Endothelial cell of umbilical vein (primary cell): ENCODE measurements at regions of chr13 and their contacts with region 1.

Region 1: DNA sequence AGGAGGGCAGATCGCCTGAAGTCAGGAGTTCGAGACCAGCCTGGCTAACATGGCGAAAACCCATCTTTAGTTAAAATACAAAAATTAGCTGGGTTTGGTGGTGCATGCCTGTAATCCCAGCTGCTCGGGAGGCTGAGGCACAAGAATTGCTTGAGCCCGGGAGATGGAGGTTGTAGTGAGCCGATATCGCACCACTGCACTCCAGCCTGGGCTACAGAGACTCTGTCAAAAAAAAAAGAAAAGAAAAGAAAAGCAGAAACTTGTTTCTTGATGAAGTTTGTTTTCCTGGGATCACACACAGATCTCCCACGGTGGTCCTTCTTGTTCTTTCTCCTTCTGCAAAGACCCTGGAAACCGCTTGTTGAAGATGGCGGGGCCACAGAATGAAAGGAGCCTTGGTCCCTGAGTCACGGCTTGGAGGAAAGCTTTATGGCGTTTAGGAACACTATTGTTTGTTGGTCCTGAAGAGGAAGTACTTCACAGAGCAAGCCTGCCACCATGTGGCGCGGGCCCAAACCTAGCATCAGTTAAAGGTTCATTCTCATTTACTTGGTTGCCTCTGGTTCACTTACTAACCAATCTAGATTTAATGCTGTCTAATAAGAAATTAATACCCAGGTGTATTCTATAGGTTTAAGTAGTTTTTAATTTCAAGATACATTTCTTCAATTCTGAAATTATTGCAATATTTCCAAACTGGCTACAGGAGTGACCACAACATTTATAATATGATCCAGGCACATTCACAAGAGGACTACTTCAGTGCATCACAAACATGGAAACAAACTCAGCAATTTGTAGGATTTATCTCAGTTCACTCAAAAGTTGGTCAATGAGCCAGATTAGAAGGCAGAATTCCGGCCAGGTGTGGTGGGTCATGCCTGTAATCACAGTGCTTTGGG is 21.3 kb upstream of the ARL11 start:
- DNase-seq: peak; percentile 89
- H3K4me3 ChIP-seq: peak overlapping the region in 2 of 3 experiments; percentile 5 to 27
- H3K27ac ChIP-seq: peak overlapping the region; percentile 28
- H3K4me1 ChIP-seq: no peaks in the 10 kb centered on the region
- H3K27me3 ChIP-seq: no peaks in the 10 kb centered on the region
- CTCF ChIP-seq: peak; percentile 80 to 83
- POLR2A ChIP-seq: no peak

Region 2: DNA sequence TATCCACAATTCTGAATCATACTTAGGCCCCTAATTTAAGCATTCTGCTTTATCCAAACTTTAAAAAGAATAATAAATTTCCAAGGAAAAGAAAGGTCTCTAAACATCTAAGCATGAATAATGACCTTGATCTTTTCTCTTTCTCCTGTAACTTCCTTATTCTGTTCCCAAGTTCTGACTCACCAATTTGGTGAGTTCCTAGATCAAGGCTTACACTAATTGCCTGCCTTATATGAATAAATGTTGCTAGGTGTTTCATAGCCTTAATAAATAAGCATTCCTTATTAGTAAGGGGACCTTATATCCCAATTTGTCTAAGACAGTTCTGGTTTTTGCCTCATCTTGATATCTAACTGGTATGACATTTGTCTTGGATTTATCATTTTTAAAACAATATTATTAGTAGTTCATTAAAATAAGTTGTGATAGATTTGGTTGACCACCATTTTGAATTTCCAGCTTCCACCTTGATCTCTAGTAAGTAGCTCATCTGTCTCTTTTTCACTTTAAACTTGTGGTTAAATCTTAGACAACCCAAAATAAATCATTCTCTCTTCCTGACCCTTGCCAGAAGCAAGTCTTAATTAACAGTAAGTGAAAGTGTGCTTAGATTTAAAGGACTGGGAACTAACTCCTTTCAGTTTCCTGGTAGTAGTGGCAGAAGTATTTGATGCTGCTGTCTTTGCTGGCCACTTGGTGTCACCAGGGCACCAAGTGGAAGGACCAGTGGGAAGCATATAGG is 508.1 kb before region 1 on chr13:
- CTCF ChIA-PET with region 1: interaction called, 8 read pairs
- POLR2A ChIA-PET with region 1: no interaction called
- dilution Hi-C with region 1: no loop called
- intact Hi-C with region 1: loop called (anchors 5 kb)
- DNase-seq: peak; percentile 65
- H3K4me3 ChIP-seq: peak overlapping the region in 1 of 3 experiments; percentile 12
- H3K27ac ChIP-seq: peak overlapping the region; percentile 70
- H3K4me1 ChIP-seq: peaks cover 24% of the 10 kb centered on the region
- H3K27me3 ChIP-seq: no peaks in the 10 kb centered on the region
- CTCF ChIP-seq: peak in 1 of 2 donors; percentile 42
- POLR2A ChIP-seq: no peak

Region 3: DNA sequence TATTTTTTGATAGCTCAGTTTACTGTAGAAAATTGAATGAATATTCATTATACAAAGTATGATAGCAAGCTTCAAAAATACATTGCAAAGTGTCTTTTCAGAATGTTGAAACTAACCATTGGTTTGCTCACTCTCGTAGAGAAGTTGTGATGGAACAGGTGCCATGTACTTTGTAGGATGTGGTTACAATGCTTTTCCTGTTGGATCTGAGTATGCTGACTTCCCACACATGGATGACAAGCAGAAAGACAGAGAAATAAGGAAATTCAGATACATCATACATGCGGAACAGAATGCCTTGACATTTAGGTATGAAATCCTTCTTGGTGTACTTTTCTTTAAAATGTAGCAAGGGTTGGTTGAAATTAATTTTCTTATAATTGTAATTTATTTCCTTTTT is 328.8 kb before region 1 on chr13:
- CTCF ChIA-PET with region 1: interaction called, 12 read pairs
- POLR2A ChIA-PET with region 1: no interaction called
- dilution Hi-C with region 1: no loop called
- intact Hi-C with region 1: no loop called
- DNase-seq: no peak
- H3K4me3 ChIP-seq: no peak overlapping the region
- H3K27ac ChIP-seq: no peak overlapping the region
- H3K4me1 ChIP-seq: no peaks in the 10 kb centered on the region
- H3K27me3 ChIP-seq: no peaks in the 10 kb centered on the region
- CTCF ChIP-seq: no peak
- POLR2A ChIP-seq: no peak

Region 4: GRCh38 chr13:49421391-49421790 is 185.6 kb before region 1 on chr13:
- CTCF ChIA-PET with region 1: interaction called, 5 read pairs
- POLR2A ChIA-PET with region 1: no interaction called
- dilution Hi-C with region 1: no loop called
- intact Hi-C with region 1: loop called (anchors 1 kb)
- DNase-seq: peak; percentile 3
- H3K4me3 ChIP-seq: no peak overlapping the region
- H3K27ac ChIP-seq: no peak overlapping the region
- H3K4me1 ChIP-seq: no peaks in the 10 kb centered on the region
- H3K27me3 ChIP-seq: no peaks in the 10 kb centered on the region
- CTCF ChIP-seq: peak; percentile 11 to 19
- POLR2A ChIP-seq: no peak

Region 5: DNA sequence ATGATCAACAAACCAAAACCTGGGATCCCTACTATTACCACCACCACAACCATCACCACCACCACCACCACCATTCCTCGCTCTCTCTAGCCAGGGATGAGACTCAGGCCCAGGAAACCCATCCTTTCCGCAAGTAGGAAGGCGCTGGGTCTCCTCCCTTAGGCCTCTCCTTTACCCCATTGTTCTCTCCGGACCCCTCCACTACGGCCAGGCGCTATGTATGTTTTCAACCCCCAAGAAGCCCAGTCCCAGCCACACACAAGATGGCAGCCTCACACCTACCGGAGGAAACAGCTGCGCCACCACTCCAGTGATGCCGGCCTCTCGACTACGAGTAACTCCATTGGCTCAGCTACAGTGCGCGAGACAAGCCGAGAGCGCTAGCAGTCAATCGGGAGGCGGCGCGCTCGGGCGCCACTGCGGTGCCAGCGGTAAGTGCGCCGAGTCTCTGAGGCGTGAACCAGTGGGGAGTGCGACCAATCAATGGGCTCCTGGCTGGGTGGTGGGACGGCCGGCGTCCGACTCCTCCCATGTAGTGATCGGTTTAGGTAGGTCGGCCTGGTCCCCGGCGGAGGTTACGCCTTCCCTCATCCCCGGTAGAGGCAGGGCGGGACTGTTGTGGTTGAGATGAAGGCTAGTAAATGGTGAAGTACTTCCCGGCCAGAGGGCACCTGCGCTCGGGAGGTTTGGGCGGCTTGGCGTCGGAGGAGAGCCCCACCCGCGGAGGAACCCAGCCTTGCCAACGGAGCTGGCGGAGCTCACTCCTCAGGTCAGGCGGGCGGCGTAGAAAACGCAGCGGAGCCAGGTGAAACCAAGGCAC is 163.1 kb before region 1 on chr13 and contains the starts of genes CAB39L and SETDB2:
- CTCF ChIA-PET with region 1: interaction called, 6 read pairs
- POLR2A ChIA-PET with region 1: no interaction called
- dilution Hi-C with region 1: no loop called
- intact Hi-C with region 1: loop called (anchors 2 kb)
- DNase-seq: peak; percentile 99
- H3K4me3 ChIP-seq: peak within 1 kb of the TSS; percentile 43 to 73 (median 66)
- H3K27ac ChIP-seq: peak within 1 kb of the TSS; percentile 73
- H3K4me1 ChIP-seq: peaks cover 20% of the 10 kb centered on the region
- H3K27me3 ChIP-seq: no peaks in the 10 kb centered on the region
- CTCF ChIP-seq: peak; percentile 28 to 52
- POLR2A ChIP-seq: peak; percentile 56
- total RNA-seq, gene CAB39L: 5.8 and 7.2 TPM in 2 replicates
- total RNA-seq, gene SETDB2: 5.4 and 5.6 TPM in 2 replicates

Region 6: DNA sequence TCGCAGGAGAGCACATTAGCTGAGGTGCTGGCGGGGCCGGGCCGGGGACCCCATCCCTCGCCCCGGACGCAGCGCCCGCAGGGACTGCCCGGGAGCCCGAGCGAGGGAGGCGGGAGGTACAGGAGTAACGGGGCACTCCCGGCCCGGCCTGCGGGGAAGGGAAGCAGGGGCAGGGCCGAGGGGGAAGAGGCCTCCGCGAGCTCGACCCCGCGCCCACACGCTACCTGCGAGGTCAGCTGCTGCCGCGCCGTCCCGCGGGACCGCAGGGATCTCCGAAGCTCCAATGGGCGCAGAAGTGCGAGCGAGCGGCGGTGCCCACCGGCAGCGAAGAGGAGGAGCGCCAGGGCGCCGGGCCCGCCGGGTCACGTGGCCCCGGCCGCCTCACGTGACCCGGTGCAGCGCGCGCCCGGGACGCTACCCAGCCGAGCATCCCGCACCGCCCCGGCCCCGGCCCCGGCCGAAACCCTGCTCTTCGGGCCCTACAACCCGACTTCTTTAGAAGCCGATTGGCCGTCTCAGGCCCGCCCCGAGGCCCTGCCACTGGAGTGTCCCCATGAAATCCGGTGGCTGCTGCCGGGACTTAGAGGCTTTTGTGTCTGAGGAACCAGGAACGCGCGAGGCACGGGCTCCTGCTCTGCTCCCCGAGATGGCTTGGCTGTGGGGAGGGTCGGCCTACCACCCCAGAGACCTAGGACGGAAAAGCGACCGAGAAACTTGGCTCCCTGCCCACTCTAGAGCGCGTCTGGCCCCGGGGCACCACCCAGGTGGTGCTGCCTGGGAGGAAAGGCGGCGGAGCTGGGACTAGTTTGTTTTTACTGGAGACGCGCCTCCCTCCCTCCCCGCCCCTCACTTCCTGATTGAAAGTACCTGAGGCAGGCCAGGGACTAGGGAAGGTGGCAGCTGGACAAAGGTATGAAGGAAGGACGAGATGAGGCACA is 21.5 kb before region 1 on chr13 and contains the start of gene RCBTB1:
- CTCF ChIA-PET with region 1: interaction called, 12 read pairs
- POLR2A ChIA-PET with region 1: no interaction called
- dilution Hi-C with region 1: no loop called
- intact Hi-C with region 1: no loop called
- DNase-seq: peak; percentile 69
- H3K4me3 ChIP-seq: peak within 1 kb of the TSS; percentile 85 to 94 (median 89)
- H3K27ac ChIP-seq: peak within 1 kb of the TSS; percentile 64
- H3K4me1 ChIP-seq: peaks cover 16% of the 10 kb centered on the region
- H3K27me3 ChIP-seq: no peaks in the 10 kb centered on the region
- CTCF ChIP-seq: no peak
- POLR2A ChIP-seq: peak; percentile 69
- total RNA-seq, gene RCBTB1: 23.6 and 23.8 TPM in 2 replicates